ENCODE measurements at regions of chr12 and their contacts with region 1.

Region 1: GRCh38 chr12:22083167-22083566 is 37.1 kb downstream of the CMAS start:
- DNase-seq: peak in 7 of 14 experiments; percentile 8 to 71 (median 51)
- ATAC-seq: peak; percentile 55
- H3K4me3 ChIP-seq: no peak overlapping the region
- H3K4me3 Mint-ChIP-seq: no peak overlapping the region
- H3K27ac ChIP-seq: no peak overlapping the region
- H3K27ac Mint-ChIP-seq: no peak overlapping the region
- H3K4me1 ChIP-seq: no peaks in the 10 kb centered on the region
- H3K4me1 Mint-ChIP-seq: no peaks in the 10 kb centered on the region
- H3K27me3 ChIP-seq: no peaks in the 10 kb centered on the region
- H3K27me3 Mint-ChIP-seq: no peaks in the 10 kb centered on the region
- CTCF ChIP-seq: peak; percentile 70

Region 2: DNA sequence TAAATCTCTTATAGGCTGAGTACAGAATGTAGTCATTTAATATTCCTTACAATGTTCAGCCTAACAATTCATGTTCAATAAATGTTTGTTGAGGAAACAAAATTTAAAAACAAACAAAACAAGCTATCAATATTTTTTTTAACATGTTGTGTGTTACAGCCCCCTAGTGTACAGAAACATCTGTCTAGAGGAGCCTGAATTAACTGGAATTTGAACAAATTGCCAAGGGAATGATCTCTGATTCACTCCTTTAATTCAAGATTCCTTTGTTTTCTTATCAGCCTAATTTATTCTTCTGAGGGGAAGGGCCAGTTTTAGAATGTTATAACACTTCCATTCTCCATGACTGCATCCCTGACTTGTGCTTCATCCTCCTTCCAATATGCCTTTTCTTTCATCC is 90.0 kb after region 1 on chr12:
- CTCF ChIA-PET with region 1: no interaction called
- POLR2A ChIA-PET with region 1: no interaction called
- intact Hi-C with region 1: loop called (anchors 1 to 5 kb)
- DNase-seq: peak in 2 of 14 experiments; percentile 15 to 17
- ATAC-seq: no peak
- H3K4me3 ChIP-seq: no peak overlapping the region
- H3K4me3 Mint-ChIP-seq: no peak overlapping the region
- H3K27ac ChIP-seq: no peak overlapping the region
- H3K27ac Mint-ChIP-seq: no peak overlapping the region
- H3K4me1 ChIP-seq: no peaks in the 10 kb centered on the region
- H3K4me1 Mint-ChIP-seq: peaks cover 10% of the 10 kb centered on the region
- H3K27me3 ChIP-seq: no peaks in the 10 kb centered on the region
- H3K27me3 Mint-ChIP-seq: no peaks in the 10 kb centered on the region
- CTCF ChIP-seq: no peak

Region 3: DNA sequence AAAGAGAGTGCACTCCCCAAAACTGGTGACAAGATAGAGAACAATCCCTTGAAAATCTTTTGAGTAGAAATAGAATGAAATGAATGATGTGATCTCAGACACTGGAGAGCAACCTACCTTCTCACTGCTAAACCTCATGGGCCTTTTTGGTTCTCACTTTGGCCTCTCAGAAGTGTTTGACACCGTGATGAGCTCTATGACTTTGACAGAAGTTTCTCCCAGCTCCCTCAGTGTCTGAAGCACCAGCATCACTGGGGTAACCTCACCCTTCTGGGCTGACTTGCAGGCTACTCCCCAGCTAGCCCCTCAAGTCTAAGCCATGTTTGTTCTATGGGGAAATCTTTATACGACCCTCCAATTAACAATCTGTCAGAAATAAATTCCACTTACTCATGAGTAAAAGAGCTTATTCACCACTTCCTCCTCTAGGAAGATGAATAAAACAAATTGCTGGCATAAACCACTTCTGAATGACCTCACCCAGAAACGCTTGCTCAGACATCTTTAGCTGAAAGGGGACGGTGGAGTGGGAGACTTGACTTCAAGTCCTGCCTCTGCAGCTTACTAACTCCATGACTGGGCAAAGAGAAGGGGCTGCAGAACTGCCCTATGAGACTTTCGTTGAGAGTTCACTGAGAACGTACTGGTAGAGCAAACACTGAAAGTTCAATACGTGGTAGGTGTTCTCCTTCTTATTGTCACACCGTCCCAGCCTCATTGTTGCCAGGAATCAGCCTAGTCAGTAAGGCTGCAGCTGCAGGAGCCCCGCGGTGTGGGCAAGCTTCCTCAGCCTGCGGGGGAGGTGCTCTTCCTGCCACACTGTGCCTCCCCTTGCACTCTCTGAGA is 204.8 kb after region 1 on chr12:
- CTCF ChIA-PET with region 1: no interaction called
- POLR2A ChIA-PET with region 1: no interaction called
- intact Hi-C with region 1: no loop called
- DNase-seq: peak in 8 of 14 experiments; percentile 0 to 35 (median 15)
- ATAC-seq: peak; percentile 37
- H3K4me3 ChIP-seq: peak overlapping the region; percentile 9
- H3K4me3 Mint-ChIP-seq: peak overlapping the region; percentile 8
- H3K27ac ChIP-seq: no peak overlapping the region
- H3K27ac Mint-ChIP-seq: no peak overlapping the region
- H3K4me1 ChIP-seq: peaks cover 12% of the 10 kb centered on the region
- H3K4me1 Mint-ChIP-seq: peaks cover 31% of the 10 kb centered on the region
- H3K27me3 ChIP-seq: no peaks in the 10 kb centered on the region
- H3K27me3 Mint-ChIP-seq: no peaks in the 10 kb centered on the region
- CTCF ChIP-seq: no peak

Region 4: GRCh38 chr12:22459838-22460490 is 376.8 kb after region 1 on chr12:
- CTCF ChIA-PET with region 1: interaction called, 8 read pairs
- POLR2A ChIA-PET with region 1: no interaction called
- intact Hi-C with region 1: loop called (anchors 1 to 5 kb)
- DNase-seq: peak in 3 of 14 experiments; percentile 54 to 68 (median 65)
- ATAC-seq: peak; percentile 58
- H3K4me3 ChIP-seq: no peak overlapping the region
- H3K4me3 Mint-ChIP-seq: no peak overlapping the region
- H3K27ac ChIP-seq: no peak overlapping the region
- H3K27ac Mint-ChIP-seq: no peak overlapping the region
- H3K4me1 ChIP-seq: no peaks in the 10 kb centered on the region
- H3K4me1 Mint-ChIP-seq: peaks cover 7% of the 10 kb centered on the region
- H3K27me3 ChIP-seq: no peaks in the 10 kb centered on the region
- H3K27me3 Mint-ChIP-seq: no peaks in the 10 kb centered on the region
- CTCF ChIP-seq: peak; percentile 62

Region 5: DNA sequence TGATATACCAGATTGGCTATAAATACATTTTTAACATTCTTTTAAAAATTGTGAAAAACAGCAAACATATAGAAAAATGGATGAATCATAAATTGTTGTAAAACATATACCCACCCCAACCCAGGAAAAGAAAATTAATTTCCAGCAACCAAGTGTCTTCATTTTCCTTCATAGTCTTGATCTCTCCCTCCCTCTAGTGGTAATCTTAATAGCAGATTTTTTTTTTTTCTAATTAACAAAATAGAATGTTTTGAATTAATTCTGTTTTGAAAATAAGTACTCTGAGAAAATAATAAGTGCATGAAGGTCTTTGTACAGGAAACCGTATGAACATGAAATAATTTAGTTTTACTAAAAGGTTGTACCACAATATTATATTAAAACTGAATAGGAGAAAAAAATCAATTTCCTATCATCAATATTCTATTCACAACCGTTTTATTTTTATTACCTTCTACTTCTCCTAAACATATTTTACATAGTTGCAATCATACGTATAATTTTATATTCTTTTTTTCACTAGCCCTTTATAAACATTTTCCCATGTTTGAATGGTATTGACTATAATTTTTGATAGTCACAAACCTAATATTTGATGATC is 548.8 kb after region 1 on chr12:
- CTCF ChIA-PET with region 1: no interaction called
- POLR2A ChIA-PET with region 1: no interaction called
- intact Hi-C with region 1: loop called in 1 of 2 experiments (anchors 10 kb)
- DNase-seq: peak in 3 of 14 experiments; percentile 43 to 54 (median 49)
- ATAC-seq: peak; percentile 61
- H3K4me3 ChIP-seq: no peak overlapping the region
- H3K4me3 Mint-ChIP-seq: no peak overlapping the region
- H3K27ac ChIP-seq: no peak overlapping the region
- H3K27ac Mint-ChIP-seq: no peak overlapping the region
- H3K4me1 ChIP-seq: peaks cover 11% of the 10 kb centered on the region
- H3K4me1 Mint-ChIP-seq: peaks cover 81% of the 10 kb centered on the region
- H3K27me3 ChIP-seq: no peaks in the 10 kb centered on the region
- H3K27me3 Mint-ChIP-seq: no peaks in the 10 kb centered on the region
- CTCF ChIP-seq: peak; percentile 82

Measured in CD4-positive, alpha-beta T cell (primary cell).